Left lung (tissue), 14 donors: ENCODE measurements at regions of chr17 and their contacts with region 1.

Region 1: GRCh38 chr17:51888816-51889215 is 269.7 kb downstream of the CA10 start:
- DNase-seq: no peak
- ATAC-seq: no peak
- H3K4me3 ChIP-seq: no peak overlapping the region
- H3K27ac ChIP-seq: no peak overlapping the region
- H3K4me1 ChIP-seq: no peaks in the 10 kb centered on the region
- H3K27me3 ChIP-seq: no peaks in the 10 kb centered on the region
- CTCF ChIP-seq: no peak

Region 2: GRCh38 chr17:51941247-51941646 is 52.4 kb after region 1 on chr17:
- intact Hi-C with region 1: loop called in 1 of 2 experiments (anchors 5 kb)
- DNase-seq: no peak
- ATAC-seq: no peak
- H3K4me3 ChIP-seq: no peak overlapping the region
- H3K27ac ChIP-seq: no peak overlapping the region
- H3K4me1 ChIP-seq: no peaks in the 10 kb centered on the region
- H3K27me3 ChIP-seq: no peaks in the 10 kb centered on the region
- CTCF ChIP-seq: no peak